Common myeloid progenitor, CD34-positive (primary cell): ENCODE measurements at regions of chr2 and their contacts with region 1.

Region 1: DNA sequence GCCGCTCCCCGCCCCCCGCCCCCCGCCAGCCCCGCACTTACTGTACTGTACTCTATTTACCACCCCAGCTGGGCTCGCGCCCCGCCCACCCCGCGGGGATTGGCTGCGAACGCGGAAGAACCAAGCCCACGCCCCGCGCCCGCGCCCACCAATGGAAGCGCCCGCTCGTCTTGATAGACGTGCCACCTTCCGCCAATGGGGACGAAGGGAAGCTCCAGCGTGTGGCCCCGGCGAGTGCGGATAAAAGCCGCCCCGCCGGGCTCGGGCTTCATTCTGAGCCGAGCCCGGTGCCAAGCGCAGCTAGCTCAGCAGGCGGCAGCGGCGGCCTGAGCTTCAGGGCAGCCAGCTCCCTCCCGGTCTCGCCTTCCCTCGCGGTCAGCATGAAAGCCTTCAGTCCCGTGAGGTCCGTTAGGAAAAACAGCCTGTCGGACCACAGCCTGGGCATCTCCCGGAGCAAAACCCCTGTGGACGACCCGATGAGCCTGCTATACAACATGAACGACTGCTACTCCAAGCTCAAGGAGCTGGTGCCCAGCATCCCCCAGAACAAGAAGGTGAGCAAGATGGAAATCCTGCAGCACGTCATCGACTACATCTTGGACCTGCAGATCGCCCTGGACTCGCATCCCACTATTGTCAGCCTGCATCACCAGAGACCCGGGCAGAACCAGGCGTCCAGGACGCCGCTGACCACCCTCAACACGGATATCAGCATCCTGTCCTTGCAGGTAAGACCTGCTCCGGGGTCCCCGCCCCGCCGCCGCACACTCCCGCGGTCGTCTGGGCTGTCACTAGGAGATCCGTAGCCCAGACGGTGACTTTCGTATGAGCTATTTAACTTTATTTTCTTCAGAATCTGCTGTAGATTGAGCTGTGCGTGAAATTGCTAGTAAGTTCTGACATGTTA is at the start of gene ID2:
- DNase-seq: peak; percentile 98 to 99 (median 99)
- H3K4me3 ChIP-seq: peak within 1 kb of the TSS; percentile 65 to 94 (median 83)
- H3K27ac ChIP-seq: peak within 1 kb of the TSS; percentile 5 to 65
- H3K4me1 ChIP-seq: peaks cover 5 to 65% (median 57%) of the 10 kb centered on the region in 4 experiments
- H3K27me3 ChIP-seq: peaks cover 0 to 11% (median 6%) of the 10 kb centered on the region in 5 experiments

Region 2: DNA sequence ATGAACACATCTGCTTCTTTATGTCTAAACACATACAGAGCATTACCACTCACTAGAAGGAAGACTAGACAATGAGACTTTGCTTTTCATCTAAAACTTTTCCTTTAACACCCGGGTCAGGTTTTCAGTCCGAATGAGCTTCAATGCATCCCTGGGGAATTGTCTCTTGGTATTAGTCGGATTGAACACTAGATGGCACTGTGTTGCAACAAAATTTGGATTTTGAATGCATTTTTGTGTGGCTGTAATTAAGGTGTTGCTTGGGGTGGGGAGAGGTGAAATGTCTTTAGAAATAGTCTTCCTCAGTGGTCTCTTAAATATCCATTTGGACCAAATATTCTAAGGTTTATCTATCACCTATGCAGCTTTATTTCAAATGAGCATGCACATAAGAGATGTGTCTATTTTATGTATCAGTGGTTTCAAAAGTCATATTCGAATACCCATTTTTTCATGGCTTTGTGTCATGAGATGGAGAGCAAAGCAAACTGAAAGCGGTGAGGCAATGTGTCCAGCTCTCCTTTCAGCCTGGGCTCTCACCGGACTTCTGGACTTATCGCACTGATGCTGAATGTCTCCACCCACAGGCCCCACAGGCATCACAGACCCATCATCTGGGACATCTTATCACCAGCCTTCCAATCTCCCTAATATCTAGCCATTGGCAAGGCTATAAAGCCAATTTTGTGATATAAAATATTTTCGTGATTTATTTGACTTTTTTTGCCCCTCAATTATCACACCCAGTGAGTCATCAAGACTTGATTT is 1254.6 kb before region 1 on chr2:
- CTCF ChIA-PET with region 1: interaction called, 26 read pairs
- POLR2A ChIA-PET with region 1: no interaction called
- DNase-seq: peak; percentile 52 to 70 (median 64)
- H3K4me3 ChIP-seq: no peak overlapping the region
- H3K27ac ChIP-seq: no peak overlapping the region
- H3K4me1 ChIP-seq: peaks cover 13 to 29% (median 22%) of the 10 kb centered on the region in 4 experiments
- H3K27me3 ChIP-seq: no peaks in the 10 kb centered on the region

Region 3: GRCh38 chr2:8574144-8575037 is 107.6 kb before region 1 on chr2:
- CTCF ChIA-PET with region 1: interaction called, 14 read pairs
- POLR2A ChIA-PET with region 1: interaction called, 4 read pairs
- DNase-seq: peak in 2 of 3 donors; percentile 68 to 76
- H3K4me3 ChIP-seq: peak overlapping the region in 3 of 7 experiments; percentile 22 to 60 (median 50)
- H3K27ac ChIP-seq: no peak overlapping the region
- H3K4me1 ChIP-seq: peaks cover 0 to 69% (median 46%) of the 10 kb centered on the region in 4 experiments
- H3K27me3 ChIP-seq: no peaks in the 10 kb centered on the region

Region 4: DNA sequence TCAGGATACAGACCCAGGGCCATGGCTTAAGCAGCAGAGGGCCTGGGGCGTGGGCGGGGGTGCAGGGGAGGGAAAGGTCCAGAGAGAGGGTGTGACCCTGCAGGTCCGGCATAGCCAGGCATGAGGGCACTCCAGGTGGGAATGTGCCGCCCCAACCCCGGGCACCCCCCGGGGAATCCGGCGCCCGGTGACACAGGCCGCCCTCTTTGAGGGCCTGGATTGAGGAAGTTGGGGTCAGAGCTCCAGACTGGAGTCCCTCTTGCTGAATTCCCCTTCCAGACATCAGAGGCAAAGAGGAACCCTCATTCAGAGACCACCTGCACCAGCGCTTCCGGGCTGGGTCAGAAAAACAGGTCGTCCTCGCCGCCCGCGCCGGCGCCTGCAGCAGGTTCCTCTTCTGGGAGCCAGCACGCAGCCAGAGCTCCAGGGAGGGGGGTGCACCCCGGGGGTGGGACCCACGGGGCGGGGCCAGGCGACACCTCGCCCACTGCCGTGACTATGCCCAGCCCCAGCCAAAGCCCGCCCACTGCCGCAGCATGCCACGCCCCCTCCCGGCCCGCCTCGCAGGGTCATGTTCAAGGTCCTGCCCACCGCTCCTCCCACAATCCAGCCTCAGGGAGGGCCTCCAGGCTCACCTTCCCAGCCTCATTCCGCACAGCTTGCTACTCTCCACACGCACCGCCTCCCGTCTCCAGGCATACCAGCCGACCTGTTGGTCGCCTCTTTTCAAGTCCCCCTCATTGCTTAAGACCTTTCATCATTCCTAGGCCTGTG is 98.5 kb before region 1 on chr2:
- CTCF ChIA-PET with region 1: interaction called, 14 read pairs
- POLR2A ChIA-PET with region 1: interaction called, 33 read pairs
- DNase-seq: peak; percentile 98 to 100 (median 100)
- H3K4me3 ChIP-seq: peak overlapping the region in 4 of 7 experiments; percentile 26 to 51 (median 41)
- H3K27ac ChIP-seq: peak overlapping the region; percentile 16 to 63
- H3K4me1 ChIP-seq: peaks cover 4 to 86% (median 73%) of the 10 kb centered on the region in 4 experiments
- H3K27me3 ChIP-seq: no peaks in the 10 kb centered on the region

Region 5: GRCh38 chr2:8663997-8664396 is 18.0 kb before region 1 on chr2:
- CTCF ChIA-PET with region 1: interaction called, 5 read pairs
- POLR2A ChIA-PET with region 1: interaction called, 10 read pairs
- DNase-seq: peak; percentile 62 to 92 (median 83)
- H3K4me3 ChIP-seq: no peak overlapping the region
- H3K27ac ChIP-seq: no peak overlapping the region
- H3K4me1 ChIP-seq: peaks cover 0 to 36% (median 20%) of the 10 kb centered on the region in 4 experiments
- H3K27me3 ChIP-seq: no peaks in the 10 kb centered on the region

Region 6: DNA sequence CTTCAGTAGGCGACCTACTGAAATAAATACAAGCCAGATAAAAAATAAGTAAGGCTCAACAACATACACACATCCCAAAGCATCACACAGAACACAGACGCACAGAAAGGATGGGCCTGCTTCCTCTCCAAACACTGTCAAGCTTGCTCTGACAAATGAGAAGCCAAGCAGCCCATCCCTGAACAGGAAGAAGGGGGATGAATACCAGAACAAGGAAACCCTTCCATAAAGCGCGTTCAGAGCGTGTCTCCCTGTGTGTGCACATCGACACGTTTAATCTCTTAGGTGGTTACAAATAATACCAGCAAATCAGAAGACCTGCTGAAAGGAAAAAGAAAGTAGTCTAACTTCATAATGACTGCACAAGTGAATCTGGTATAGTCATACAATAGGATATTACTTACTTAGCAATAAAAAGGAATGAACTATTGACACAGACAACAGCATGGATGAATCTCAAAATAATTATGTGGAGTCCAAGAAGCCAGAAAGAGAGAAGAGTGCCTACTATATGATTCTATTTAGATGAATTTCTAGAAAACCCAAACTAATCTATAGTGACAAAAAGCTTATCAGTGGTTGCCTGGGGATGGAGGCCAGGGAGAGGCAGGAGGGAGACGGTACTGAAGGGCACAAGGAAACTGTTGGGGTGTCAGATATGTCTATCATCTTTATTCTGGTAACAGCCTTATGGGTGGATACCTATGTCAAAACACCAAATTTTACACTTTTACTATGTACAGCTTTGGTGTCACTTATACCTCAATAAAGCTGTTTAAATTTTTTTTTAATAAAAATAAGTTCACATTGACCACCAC is 294.6 kb after region 1 on chr2:
- CTCF ChIA-PET with region 1: no interaction called
- POLR2A ChIA-PET with region 1: no interaction called
- DNase-seq: peak in 2 of 3 donors; percentile 29 to 38
- H3K4me3 ChIP-seq: peak overlapping the region in 2 of 7 experiments; percentile 2 to 4
- H3K27ac ChIP-seq: peak overlapping the region in 1 of 2 experiments; percentile 20
- H3K4me1 ChIP-seq: peaks cover 3 to 8% (median 6%) of the 10 kb centered on the region in 4 experiments
- H3K27me3 ChIP-seq: no peaks in the 10 kb centered on the region